PC-3 (cell line): ENCODE measurements at regions of chr19 and their contacts with region 1.

Region 1: GRCh38 chr19:44845612-44846454 is at the start of gene NECTIN2:
- DNase-seq: peak; percentile 96
- ATAC-seq: peak; percentile 47
- H3K4me3 ChIP-seq: peak within 1 kb of the TSS; percentile 84
- H3K27ac ChIP-seq: peak within 1 kb of the TSS; percentile 36
- H3K4me1 ChIP-seq: peaks cover 14% of the 10 kb centered on the region
- H3K27me3 ChIP-seq: no peaks in the 10 kb centered on the region
- CTCF ChIP-seq: peak; percentile 78
- total RNA-seq, gene NECTIN2: 61.0 and 71.6 TPM in 2 replicates

Region 2: DNA sequence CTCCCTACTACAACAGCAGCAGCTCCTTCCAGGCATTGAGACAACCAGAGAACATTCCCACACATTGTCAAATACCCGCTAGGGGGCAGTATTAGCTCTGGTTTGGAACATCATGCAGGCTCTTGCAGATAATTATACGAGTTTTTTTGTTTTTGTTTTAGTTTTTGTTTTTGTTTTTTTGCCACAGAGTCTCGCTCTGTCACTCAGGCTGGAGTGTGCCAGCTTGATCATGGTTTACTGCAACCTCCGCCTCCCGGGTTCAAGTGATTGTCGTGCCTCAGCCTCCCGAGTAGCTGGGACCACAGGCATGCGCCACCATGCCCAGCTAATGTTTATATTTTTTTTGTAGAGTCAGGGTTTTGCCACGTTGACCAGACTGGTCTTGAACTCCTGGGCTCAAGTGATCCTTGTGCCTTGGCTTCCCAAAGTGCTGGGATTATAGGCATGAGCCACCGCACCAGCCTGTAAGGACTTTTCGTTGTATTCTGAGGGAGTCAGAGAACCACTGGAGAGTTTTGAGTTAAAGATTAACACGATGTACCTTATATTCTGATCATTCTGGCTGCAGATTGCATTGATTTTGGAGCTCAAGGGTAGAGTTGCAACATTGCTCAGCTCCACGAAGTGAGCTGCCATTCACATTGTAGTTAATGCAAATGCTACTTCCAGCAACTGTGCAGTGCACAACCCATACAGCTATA is 274.7 kb before region 1 on chr19:
- CTCF ChIA-PET with region 1: no interaction called
- POLR2A ChIA-PET with region 1: no interaction called
- intact Hi-C with region 1: loop called (anchors 10 kb)
- DNase-seq: peak; percentile 85
- ATAC-seq: peak; percentile 84
- H3K4me3 ChIP-seq: no peak overlapping the region; the same call in 1 of the 2 replicates
- H3K27ac ChIP-seq: no peak overlapping the region
- H3K4me1 ChIP-seq: peaks cover 15% of the 10 kb centered on the region
- H3K27me3 ChIP-seq: peaks cover 14% of the 10 kb centered on the region
- CTCF ChIP-seq: peak; percentile 80

Region 3: DNA sequence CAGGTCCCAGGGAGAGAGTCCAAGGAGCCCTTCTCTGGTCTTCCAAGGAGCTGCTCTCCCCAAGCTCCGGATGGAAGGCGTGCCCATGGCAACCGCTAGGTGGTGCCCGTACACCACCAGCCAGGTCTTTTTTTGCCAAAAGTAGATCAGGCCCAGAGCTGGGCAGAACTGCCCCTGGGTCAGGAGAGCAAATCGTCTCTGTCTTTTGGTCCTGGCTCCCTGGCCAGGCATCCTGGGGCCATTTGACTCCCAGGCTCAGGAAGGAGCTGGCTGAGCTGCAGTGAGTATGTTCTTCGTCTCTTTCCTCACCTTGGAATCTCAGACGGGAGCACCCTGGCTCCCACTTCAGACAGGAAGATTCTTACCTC is 121.9 kb before region 1 on chr19:
- CTCF ChIA-PET with region 1: no interaction called
- POLR2A ChIA-PET with region 1: interaction called, 15 read pairs
- intact Hi-C with region 1: no loop called
- DNase-seq: peak; percentile 86
- ATAC-seq: peak; percentile 84
- H3K4me3 ChIP-seq: no peak overlapping the region
- H3K27ac ChIP-seq: peak overlapping the region; percentile 76
- H3K4me1 ChIP-seq: peaks cover 28% of the 10 kb centered on the region
- H3K27me3 ChIP-seq: no peaks in the 10 kb centered on the region
- CTCF ChIP-seq: peak; percentile 89

Region 4: DNA sequence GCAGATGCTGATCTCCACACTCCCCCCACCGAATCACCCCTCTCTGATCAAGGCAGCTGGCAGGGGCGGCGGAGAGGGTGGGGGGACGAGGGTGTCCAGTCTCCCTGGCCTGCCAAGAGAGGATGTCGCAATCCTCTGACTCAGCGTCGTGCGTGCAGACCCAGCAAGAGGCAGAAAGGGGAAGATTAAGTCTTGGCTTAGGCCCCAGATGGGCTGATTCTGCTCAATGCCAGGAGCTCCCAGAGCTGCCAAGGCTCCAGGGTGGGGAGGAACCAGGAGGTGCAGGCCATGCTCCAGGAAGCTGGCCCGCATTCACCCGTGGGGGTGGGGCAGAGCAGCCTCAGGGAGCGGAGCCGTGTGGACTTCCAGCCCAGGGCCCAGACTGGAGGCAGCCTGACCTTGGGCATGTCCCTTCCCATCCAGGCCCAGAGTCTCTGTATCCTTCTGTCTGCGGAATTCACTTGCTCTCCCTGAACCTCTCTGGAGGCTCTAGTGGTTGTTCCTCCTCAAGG is 103.9 kb before region 1 on chr19:
- CTCF ChIA-PET with region 1: interaction called, 10 read pairs
- POLR2A ChIA-PET with region 1: no interaction called
- intact Hi-C with region 1: no loop called
- DNase-seq: peak; percentile 98
- ATAC-seq: peak; percentile 84
- H3K4me3 ChIP-seq: peak overlapping the region; percentile 40; the same call in 1 of the 2 replicates
- H3K27ac ChIP-seq: peak overlapping the region; percentile 99
- H3K4me1 ChIP-seq: peaks cover 45% of the 10 kb centered on the region
- H3K27me3 ChIP-seq: no peaks in the 10 kb centered on the region
- CTCF ChIP-seq: no peak

Region 5: DNA sequence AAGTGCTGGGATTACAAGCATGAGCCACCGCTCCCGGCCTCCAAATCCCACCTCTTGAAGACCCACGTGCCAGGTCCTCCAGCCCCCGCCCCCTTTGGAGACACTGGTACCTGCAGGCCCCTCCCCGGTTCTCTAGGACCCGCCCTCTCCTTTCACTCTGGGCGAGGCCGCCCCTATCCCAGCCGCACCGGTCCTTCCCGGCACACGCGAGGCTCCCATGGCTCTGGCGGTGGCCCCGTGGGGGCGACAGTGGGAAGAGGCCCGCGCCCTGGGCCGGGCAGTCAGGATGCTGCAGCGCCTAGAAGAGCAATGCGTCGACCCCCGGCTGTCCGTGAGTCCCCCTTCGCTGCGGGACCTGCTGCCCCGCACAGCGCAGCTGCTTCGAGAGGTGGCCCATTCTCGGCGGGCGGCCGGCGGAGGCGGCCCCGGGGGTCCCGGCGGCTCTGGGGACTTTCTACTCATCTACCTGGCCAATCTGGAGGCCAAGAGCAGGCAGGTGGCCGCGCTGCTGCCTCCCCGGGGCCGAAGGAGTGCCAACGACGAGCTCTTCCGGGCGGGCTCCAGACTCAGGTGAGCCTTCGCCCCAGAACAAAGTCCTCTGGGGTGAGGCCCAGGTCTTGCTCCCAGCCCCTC is 68.0 kb before region 1 on chr19 and contains the start of gene CBLC:
- CTCF ChIA-PET with region 1: interaction called, 4 read pairs
- POLR2A ChIA-PET with region 1: interaction called, 25 read pairs
- intact Hi-C with region 1: loop called (anchors 5 kb)
- DNase-seq: peak; percentile 88
- ATAC-seq: peak; percentile 76
- H3K4me3 ChIP-seq: peak within 1 kb of the TSS; percentile 78
- H3K27ac ChIP-seq: peak within 1 kb of the TSS; percentile 81
- H3K4me1 ChIP-seq: peaks cover 41% of the 10 kb centered on the region
- H3K27me3 ChIP-seq: no peaks in the 10 kb centered on the region
- CTCF ChIP-seq: peak; percentile 42; the same call in 1 of the 2 replicates
- total RNA-seq, gene CBLC: 25.4 and 26.4 TPM in 2 replicates

Region 6: DNA sequence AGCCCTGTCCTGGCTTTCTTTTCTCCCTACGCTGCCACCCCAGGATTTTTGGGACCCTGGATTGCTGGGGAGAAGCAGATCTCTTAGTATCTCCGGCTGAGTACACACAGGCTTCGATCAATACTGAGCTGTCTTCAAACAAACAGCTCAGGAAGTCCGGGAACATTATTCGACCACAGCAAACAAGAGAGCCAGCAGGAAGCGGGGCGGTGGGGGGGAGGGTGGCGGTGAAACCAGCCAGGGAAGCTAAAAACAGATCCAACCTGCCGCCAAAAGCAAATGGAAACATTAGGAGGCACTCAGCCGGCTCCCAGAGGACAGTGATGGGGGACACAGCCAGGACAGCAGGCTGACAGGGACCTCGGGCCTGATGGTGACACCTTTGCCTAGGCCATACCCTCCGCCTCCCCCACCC is 49.1 kb before region 1 on chr19:
- CTCF ChIA-PET with region 1: interaction called, 3 read pairs
- POLR2A ChIA-PET with region 1: no interaction called
- intact Hi-C with region 1: loop called (anchors 2 kb)
- DNase-seq: peak; percentile 73
- ATAC-seq: peak; percentile 88
- H3K4me3 ChIP-seq: no peak overlapping the region; the same call in 1 of the 2 replicates
- H3K27ac ChIP-seq: peak overlapping the region; percentile 49
- H3K4me1 ChIP-seq: peaks cover 19% of the 10 kb centered on the region
- H3K27me3 ChIP-seq: no peaks in the 10 kb centered on the region
- CTCF ChIP-seq: no peak

Region 7: DNA sequence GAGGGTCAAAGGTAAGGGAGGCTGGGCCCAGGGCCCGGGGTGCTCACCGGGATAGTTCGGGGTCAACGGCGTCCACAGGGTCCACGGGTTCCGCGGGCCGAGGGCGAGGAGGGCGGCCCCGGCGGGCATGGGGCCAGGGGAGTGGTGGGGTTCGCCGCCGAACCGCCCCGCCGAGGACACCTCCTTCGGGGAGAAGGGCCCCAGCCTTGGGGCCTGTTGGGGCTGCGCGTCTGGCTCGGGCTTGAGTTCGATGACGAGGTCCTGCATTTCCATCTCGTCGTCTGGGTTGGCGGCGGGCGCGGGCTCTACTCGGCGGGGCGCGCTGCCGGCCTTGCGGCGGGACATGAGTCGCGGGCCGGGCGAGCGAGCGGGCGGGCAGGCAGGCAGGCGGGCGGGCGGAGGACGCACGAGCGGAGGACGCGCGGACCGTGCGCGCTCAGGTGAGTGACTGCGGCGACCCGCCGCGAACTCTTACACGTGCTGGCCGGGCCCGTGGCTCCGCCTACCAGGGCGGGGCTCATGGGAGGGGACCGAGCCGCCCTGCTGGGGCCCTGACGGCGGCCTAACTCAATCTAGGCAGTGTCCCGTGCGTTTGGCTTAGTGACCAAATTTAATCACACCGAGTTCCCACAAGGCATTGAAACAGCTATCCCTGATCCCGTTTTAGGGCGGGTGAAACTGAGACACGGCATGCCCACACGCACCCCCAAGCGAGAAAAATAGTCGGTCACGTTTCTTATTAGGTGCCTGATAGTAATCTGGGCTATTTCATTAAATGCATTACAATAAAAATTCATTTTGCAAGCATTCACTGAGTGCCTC is 230.4 kb after region 1 on chr19 and contains the start of gene ZNF296:
- CTCF ChIA-PET with region 1: no interaction called
- POLR2A ChIA-PET with region 1: no interaction called
- intact Hi-C with region 1: no loop called
- DNase-seq: peak; percentile 82
- ATAC-seq: peak; percentile 72
- H3K4me3 ChIP-seq: peak within 1 kb of the TSS; percentile 89
- H3K27ac ChIP-seq: peak within 1 kb of the TSS; percentile 13; the same call in 1 of the 2 replicates
- H3K4me1 ChIP-seq: peaks cover 11% of the 10 kb centered on the region
- H3K27me3 ChIP-seq: no peaks in the 10 kb centered on the region
- CTCF ChIP-seq: no peak
- total RNA-seq, gene ZNF296: 0.52 and 2.4 TPM in 2 replicates